Endothelial cell of umbilical vein (primary cell): ENCODE measurements at regions of chrX and their contacts with region 1.

Region 1: DNA sequence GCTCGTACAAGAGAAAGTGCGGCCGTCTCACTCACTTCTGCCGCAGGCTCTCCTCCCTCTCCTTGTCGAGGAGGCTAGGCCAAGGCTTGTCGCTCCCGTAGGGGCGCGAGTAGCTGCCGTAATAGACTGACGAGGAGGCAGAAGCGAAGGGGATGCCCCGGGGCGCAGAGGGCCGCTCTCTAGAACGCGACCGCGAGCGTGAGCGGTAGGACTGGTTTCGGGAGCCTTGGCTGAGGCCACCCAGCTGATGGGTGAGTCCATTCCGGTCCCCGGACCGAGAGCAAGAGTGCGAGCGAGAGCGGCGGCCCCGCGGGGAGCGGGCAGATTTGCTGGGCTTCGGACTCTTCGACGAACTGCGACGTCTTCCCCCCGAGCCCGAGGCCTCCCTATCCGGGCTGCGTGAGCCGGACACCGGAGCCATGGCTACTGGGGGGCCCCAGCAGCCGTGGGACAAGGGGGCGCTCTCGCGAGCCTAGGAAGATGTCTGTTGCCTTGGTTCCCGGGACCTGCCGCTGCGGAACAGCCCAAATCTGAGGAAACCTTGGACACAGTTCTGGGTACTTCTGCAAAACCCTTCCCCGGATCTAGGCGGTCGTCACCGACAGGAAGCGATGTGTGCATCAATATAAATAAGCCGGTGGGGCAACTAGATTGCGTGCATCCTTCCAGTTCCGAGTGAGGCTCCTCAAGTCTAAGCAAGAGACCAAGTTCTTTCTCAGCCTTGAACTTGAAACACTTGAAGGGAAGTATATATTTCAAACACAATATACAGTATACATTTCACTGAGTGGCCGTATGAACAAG is at the start of gene NKAP:
- DNase-seq: peak; percentile 93
- H3K4me3 ChIP-seq: peak within 1 kb of the TSS; percentile 39 to 73 (median 61)
- H3K27ac ChIP-seq: peak within 1 kb of the TSS; percentile 63
- H3K4me1 ChIP-seq: peaks cover 10% of the 10 kb centered on the region
- H3K27me3 ChIP-seq: no peaks in the 10 kb centered on the region
- CTCF ChIP-seq: no peak
- POLR2A ChIP-seq: peak; percentile 43
- total RNA-seq, gene NKAP: 7.8 and 8.0 TPM in 2 replicates

Region 2: DNA sequence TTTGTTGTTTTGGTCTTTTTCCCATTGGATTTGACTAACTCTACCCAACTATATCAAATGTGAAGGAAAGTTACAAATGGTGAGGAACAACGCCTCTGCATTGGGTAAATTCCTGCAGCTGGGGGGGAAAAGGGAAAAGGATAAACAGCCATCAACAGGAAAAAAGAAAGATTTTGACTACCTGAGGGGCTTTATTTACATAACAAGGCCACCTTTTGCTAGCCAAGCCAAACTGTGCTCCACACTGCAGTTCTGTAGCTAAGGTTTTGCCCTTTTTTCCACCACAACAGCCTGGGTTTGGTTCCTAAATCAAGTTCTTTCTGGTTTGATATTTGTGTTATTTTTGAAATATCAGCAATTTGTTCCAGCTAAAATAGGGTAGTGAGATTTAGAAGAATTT is 93.3 kb after region 1 on chrX:
- CTCF ChIA-PET with region 1: no interaction called
- POLR2A ChIA-PET with region 1: no interaction called
- dilution Hi-C with region 1: no loop called
- intact Hi-C with region 1: no loop called
- DNase-seq: no peak
- H3K4me3 ChIP-seq: no peak overlapping the region
- H3K27ac ChIP-seq: no peak overlapping the region
- H3K4me1 ChIP-seq: no peaks in the 10 kb centered on the region
- H3K27me3 ChIP-seq: no peaks in the 10 kb centered on the region
- CTCF ChIP-seq: no peak
- POLR2A ChIP-seq: no peak

Region 3: DNA sequence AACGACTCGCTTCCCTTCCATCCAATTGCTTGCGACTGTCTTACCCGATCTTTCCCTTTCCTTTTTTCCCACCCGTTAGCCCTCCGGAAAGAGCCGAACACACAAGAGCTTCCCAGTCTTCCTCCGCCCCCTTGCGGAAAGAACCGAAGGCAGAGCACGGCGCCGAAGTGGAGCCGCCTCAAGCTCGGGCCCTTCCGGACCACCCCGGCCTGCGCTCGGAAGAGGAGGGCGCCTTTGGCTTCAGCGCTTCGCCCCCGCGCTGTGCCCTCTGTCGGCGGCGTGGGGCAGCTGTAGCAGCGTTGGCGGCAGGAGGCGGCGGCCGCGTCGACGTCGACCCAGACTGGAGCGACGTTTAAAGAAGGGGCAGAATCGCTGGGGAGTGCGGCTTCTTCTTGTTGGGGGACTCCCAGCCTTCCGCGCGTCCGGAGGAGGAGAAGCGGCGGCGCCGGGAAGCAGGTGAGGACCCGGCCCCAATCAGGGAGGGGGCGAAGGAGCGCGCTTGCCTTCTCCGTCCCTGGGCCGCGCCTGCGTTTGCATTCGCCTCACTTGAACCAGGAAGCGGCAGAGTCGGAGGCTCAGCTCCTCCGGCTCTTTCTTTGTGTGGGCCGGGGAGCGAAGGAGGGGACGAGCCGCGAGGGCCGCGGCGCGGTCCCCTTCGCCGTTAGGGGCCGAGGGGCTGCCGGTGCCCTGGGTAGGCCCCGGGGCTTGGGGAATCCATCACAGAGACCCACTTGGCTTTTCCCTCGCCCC is 307.3 kb after region 1 on chrX and contains the start of gene ZBTB33:
- CTCF ChIA-PET with region 1: no interaction called
- POLR2A ChIA-PET with region 1: no interaction called
- dilution Hi-C with region 1: no loop called
- intact Hi-C with region 1: loop called (anchors 2 kb)
- DNase-seq: peak; percentile 96
- H3K4me3 ChIP-seq: peak within 1 kb of the TSS; percentile 53 to 88 (median 82)
- H3K27ac ChIP-seq: peak within 1 kb of the TSS; percentile 70
- H3K4me1 ChIP-seq: peaks cover 11% of the 10 kb centered on the region
- H3K27me3 ChIP-seq: peaks cover 3 to 11% of the 10 kb centered on the region in 2 experiments
- CTCF ChIP-seq: peak; percentile 51 to 74
- POLR2A ChIP-seq: no peak
- total RNA-seq, gene ZBTB33: 16.3 and 16.6 TPM in 2 replicates